Psoas muscle (tissue), 8 donors: ENCODE measurements at regions of chr14 and their contacts with region 1.

Region 1: GRCh38 chr14:58501214-58501816 is 73.8 kb downstream of the KIAA0586 start:
- DNase-seq: no peak
- ATAC-seq: peak in 3 of 4 donors; percentile 74 to 81 (median 79)
- H3K4me3 ChIP-seq: no peak overlapping the region
- H3K27ac ChIP-seq: no peak overlapping the region
- H3K4me1 ChIP-seq: no peaks in the 10 kb centered on the region
- H3K27me3 ChIP-seq: no peaks in the 10 kb centered on the region
- CTCF ChIP-seq: peak; percentile 80

Region 2: GRCh38 chr14:59055439-59056045 is 554.2 kb after region 1 on chr14:
- intact Hi-C with region 1: loop called (anchors 2 to 5 kb)
- DNase-seq: no peak
- ATAC-seq: peak in 3 of 4 donors; percentile 57 to 86 (median 79)
- H3K4me3 ChIP-seq: no peak overlapping the region
- H3K27ac ChIP-seq: no peak overlapping the region
- H3K4me1 ChIP-seq: no peaks in the 10 kb centered on the region
- H3K27me3 ChIP-seq: no peaks in the 10 kb centered on the region
- CTCF ChIP-seq: peak; percentile 70